Dendritic cell treated with granulocyte-macrophage colony-stimulating factor and Interleukin-4, amounts not matched to agents 40 ng/mL and 50 ng/mL, for 4 days (primary cell): ENCODE measurements at regions of chr10 and their contacts with region 1.

Region 1: DNA sequence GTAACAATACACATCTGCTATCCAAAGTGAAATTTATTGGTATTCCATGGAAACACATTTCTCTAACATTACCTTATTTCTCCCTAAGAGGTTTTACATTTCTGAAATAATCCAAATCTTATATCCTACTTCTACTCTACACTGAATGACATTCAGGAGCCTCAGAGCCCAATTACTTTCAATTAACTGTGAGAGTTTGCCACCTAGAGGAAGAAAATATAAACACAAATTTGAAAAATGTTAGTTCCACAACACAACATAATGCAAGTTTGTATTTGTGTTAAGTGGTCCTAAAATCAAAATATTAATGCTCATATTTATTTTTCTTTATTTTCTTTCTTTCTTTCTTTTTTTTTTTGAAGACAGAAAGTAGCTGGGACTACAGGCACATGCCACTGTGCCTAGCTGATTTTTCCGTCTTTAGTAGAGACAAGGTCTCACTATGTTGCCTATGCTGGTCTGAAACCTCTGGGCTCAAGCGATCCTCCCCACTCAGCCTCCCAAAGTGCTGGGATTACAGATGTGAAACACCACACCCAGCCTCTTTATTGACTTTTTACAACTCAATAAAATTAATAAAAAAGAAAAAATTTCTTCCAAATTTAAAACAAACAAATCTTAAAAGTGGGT is 46.0 kb downstream of the ATAD1 start:
- H3K4me3 Mint-ChIP-seq: no peak overlapping the region
- H3K27ac Mint-ChIP-seq: no peak overlapping the region
- H3K4me1 Mint-ChIP-seq: peaks cover 12% of the 10 kb centered on the region
- H3K27me3 Mint-ChIP-seq: no peaks in the 10 kb centered on the region

Region 2: DNA sequence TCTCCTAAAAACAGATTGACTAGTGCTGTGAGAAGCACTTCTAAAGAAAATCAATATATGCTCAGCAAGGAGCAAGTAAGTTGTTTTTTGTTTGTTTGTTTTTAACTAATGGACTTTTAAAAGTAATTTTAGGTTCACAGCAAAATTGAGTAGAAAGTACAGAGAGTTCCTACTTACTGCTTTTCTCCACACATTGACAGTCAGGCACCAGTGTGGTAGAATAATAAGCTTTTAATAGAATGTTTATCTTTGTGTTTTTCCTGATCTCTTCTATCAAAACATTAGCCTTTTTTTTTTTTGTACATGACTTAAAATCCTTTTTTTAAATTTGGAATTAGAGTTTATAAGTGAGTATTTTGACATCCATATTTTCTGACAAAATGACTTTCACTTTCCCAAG is 239.3 kb before region 1 on chr10:
- intact Hi-C with region 1: loop called (anchors 1 kb)
- H3K4me3 Mint-ChIP-seq: no peak overlapping the region
- H3K27ac Mint-ChIP-seq: no peak overlapping the region
- H3K4me1 Mint-ChIP-seq: no peaks in the 10 kb centered on the region
- H3K27me3 Mint-ChIP-seq: no peaks in the 10 kb centered on the region